ENCODE measurements at regions of chr2 and their contacts with region 1.

Region 1: GRCh38 chr2:227406177-227407031 is 18.7 kb upstream of the SCYGR1 start:
- DNase-seq: peak; percentile 92 to 98
- ATAC-seq: peak; percentile 75 to 81
- H3K4me3 ChIP-seq: no peak overlapping the region
- H3K27ac ChIP-seq: peak overlapping the region; percentile 88 to 98
- H3K4me1 ChIP-seq: peaks cover 76% of the 10 kb centered on the region
- CTCF ChIP-seq: peak; percentile 91
- EP300 ChIP-seq: peak; percentile 65 to 72; a peak in 4 of 5 replicates
- POLR2A ChIP-seq: no peak
- RAD21 ChIP-seq: peak; percentile 98

Region 2: GRCh38 chr2:227395556-227395955 is 10.8 kb before region 1 on chr2:
- CTCF ChIA-PET with region 1: interaction called, 52 read pairs
- POLR2A ChIA-PET with region 1: no interaction called
- DNase-seq: no peak
- ATAC-seq: no peak; a peak in 1 of 6 replicates
- H3K4me3 ChIP-seq: no peak overlapping the region
- H3K27ac ChIP-seq: peak overlapping the region; percentile 52 to 88
- H3K4me1 ChIP-seq: peaks cover 58% of the 10 kb centered on the region
- CTCF ChIP-seq: no peak
- EP300 ChIP-seq: no peak
- POLR2A ChIP-seq: no peak
- RAD21 ChIP-seq: no peak

Region 3: GRCh38 chr2:227471924-227472264 is 65.5 kb after region 1 on chr2 and contains the start of gene AGFG1:
- CTCF ChIA-PET with region 1: interaction called, 63 read pairs
- POLR2A ChIA-PET with region 1: interaction called, 10 read pairs
- DNase-seq: peak; percentile 86 to 88
- ATAC-seq: peak; percentile 73 to 74
- H3K4me3 ChIP-seq: peak within 1 kb of the TSS; percentile 89
- H3K27ac ChIP-seq: peak within 1 kb of the TSS; percentile 94 to 98
- H3K4me1 ChIP-seq: peaks cover 57% of the 10 kb centered on the region
- CTCF ChIP-seq: peak; percentile 90
- EP300 ChIP-seq: 0 out of 5 replicates have a peak, but pooled peaks of 1 of the 2 experiments have one; percentile 17
- POLR2A ChIP-seq: peak; percentile 43
- RAD21 ChIP-seq: peak; percentile 55 to 68
- polyA plus RNA-seq, gene AGFG1: 384 and 415 TPM in 2 replicates

Region 4: DNA sequence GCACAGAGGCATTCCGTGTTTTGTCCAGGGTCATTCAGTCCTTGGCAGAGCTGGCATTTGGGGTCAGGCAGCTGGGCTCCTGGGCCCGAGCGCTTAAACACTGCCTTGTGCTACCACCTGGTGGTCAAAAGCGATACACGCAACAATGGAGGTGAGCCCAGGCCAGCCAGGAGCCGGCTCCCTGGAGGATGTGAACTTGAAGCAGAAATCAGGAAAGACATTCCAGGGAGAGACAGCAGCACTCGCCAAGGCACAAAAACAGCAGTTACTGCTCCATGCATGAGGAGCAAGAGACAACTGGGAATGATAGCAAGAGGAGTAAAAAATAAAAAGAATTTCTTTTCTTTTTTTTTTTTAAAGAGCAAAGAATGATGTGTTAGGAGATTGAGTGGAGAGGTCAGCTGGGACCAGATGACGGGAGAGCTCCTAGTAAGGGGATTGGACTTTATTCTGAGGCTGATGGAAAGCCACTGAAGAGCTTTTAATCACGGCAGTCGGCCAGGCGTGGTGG is 360.0 kb after region 1 on chr2:
- CTCF ChIA-PET with region 1: interaction called, 44 read pairs
- POLR2A ChIA-PET with region 1: interaction called, 6 read pairs
- DNase-seq: peak; percentile 71 to 85
- ATAC-seq: peak; percentile 98 to 99
- H3K4me3 ChIP-seq: no peak overlapping the region
- H3K27ac ChIP-seq: peak overlapping the region; percentile 77 to 84
- H3K4me1 ChIP-seq: peaks cover 33% of the 10 kb centered on the region
- CTCF ChIP-seq: peak; percentile 91
- EP300 ChIP-seq: no peak
- POLR2A ChIP-seq: no peak
- RAD21 ChIP-seq: peak; percentile 97 to 99